GM18951 (cell line): ENCODE measurements at regions of chr17 and their contacts with region 1.

Region 1: DNA sequence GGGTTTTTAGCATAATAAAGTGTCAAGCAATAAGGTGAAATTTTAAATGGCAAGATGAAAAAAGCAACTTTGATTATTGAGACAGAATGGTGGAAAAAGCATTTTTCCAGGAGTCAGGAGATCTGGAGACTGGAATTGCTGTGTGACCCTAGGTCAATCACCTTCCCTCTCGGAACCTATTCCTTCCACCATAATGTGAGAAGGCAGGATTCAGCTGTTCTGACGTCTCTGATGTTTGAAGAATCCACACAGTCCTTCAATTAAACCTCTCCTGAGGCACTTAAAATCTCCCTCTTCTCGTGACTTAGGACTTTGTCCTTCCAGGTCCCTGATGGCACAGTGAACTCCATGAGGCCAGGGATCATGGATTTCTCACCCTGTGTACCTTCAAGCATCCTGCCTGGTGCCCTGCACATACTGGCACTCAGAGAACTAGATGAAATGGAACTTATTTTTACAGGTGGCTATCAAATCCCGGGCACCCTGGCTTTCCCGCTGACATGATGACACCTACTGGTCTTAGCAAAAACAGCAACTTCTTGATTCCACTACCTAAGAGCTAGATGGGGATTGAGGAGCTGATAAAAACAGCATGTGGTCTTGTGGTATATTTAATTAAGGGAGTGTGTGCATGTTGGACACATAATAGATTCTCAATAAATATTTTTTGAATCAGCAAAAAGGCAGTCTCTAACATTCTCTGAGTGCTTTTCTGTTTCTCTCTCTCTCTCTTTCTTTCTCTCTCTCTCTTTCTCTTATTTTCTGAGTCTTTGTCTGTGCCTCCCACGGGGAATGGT is 2.3 kb upstream of the CCDC182 start:
- POLR2A ChIP-seq: no peak

Region 2: DNA sequence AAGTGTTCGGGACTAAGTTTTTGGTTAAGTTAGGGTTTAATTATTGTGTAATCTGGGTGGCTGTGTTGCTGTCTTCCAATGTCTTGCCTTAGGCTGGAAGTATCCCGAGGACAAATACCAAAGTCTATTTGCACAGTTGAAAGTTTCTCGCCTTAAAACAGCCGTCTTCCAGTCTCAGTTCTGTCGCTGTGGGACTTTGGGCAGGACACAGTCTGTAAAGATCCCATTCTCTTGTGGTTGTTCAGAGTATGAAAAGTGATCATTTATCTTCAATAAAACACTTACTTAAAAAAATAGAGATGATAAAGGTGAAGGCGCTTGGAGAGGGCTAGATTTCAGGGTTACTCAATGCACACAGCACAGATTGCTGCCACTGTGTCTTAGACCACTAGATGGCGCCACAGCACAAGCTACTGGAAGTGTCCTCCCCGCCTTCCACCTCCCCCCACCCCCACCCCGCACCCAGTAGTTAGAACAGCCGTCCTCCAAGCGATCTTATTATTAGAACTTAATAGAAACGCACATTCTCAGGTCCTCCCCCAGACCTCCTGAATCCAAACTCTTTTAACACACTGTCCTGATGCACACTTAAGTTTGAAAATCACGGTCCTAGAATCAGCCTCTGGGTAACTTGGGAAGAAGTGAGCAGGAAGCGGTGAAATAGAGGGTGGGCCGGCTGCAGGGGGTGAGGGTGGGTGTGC is 616.5 kb before region 1 on chr17:
- in situ Hi-C with region 1: loop called (anchors 25 kb)
- POLR2A ChIP-seq: no peak

Region 3: GRCh38 chr17:57243171-57243948 is 504.1 kb before region 1 on chr17:
- in situ Hi-C with region 1: loop called (anchors 10 kb)
- POLR2A ChIP-seq: no peak

Region 4: DNA sequence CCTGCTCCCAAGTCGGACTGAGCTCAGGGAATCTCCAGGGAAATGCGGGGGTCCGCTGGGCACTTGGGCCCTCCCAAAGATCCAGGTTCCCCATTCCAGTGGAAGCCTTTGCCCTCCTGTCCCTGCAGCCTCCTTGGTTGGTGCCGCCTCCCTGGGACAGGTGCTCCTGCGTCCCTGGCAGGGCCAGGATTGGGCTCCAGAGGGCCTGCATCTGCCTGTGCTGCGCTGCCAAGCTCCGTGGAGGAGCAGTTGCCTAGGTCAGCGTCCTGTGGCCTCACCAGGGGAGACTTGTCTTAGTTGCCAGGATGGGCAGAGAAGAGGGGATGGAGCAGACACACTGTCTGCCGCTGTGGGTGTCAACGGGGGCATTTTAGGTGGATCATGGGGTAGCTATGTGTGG is 424.0 kb before region 1 on chr17:
- in situ Hi-C with region 1: no loop called
- POLR2A ChIP-seq: no peak